Activated B cell treated with CpG ODN at 0.5 μM for 24 hours (primary cell): ENCODE measurements at regions of chr2 and their contacts with region 1.

Region 1: GRCh38 chr2:62306751-62307468 is 111.0 kb downstream of the B3GNT2 start:
- DNase-seq: no peak
- ATAC-seq: peak; percentile 64
- H3K4me3 Mint-ChIP-seq: peak overlapping the region; percentile 42
- H3K27ac Mint-ChIP-seq: peak overlapping the region; percentile 62
- H3K4me1 Mint-ChIP-seq: peaks cover 78% of the 10 kb centered on the region
- H3K27me3 Mint-ChIP-seq: no peaks in the 10 kb centered on the region
- CTCF ChIP-seq: no peak

Region 2: DNA sequence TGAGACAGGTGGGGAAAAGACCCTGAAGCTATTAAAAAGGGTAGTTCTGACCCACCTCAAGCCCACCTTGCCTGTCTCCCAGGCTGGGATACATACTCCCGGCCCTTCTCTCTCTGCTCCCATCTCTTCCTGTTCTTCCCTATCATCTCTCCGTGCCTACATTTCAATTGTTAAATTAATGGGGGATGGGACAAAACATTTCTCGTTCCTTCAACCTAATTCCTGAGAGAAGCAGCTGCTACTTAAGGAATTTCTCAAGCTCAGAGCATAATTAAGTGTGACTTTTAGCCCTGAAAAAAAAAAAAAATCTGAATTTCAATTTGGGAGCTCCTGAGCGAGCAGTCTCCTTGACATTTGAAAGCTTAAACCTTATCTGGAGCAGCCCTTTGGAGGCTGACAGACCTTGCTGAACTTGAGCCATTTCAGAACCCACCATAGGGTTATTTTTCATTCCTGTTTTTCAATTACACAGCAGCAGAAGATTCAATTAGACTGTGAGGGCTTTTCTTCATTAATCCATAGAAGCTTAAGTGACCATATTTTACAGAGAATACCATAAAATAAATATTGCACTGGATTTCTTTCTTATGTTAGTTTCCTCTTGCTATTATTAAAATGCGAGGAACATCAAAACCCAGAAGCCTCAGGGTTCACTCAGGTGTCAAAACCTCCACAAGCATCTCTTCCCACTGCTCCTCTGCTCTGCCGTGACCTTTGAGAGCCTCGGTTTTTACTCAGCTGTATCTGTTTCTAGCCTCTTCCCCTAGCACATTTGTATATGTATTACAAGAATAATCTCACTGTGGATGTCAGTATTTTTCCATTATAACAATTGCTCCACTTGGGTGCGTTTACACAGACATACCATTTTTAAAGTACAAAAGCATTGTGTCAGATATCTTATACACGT is 14.7 kb after region 1 on chr2:
- CTCF ChIA-PET with region 1: interaction called, 3 read pairs
- POLR2A ChIA-PET with region 1: no interaction called
- intact Hi-C with region 1: loop called (anchors 2 kb)
- DNase-seq: no peak
- ATAC-seq: no peak
- H3K4me3 Mint-ChIP-seq: no peak overlapping the region
- H3K27ac Mint-ChIP-seq: no peak overlapping the region
- H3K4me1 Mint-ChIP-seq: peaks cover 25% of the 10 kb centered on the region
- H3K27me3 Mint-ChIP-seq: no peaks in the 10 kb centered on the region
- CTCF ChIP-seq: no peak